ENCODE measurements at regions of chr4 and their contacts with region 1.

Region 1: GRCh38 chr4:6327041-6327917 is 57.6 kb downstream of the WFS1 start:
- DNase-seq: no peak
- ATAC-seq: peak; percentile 81
- H3K4me3 ChIP-seq: no peak overlapping the region
- H3K27ac ChIP-seq: no peak overlapping the region
- H3K4me1 ChIP-seq: no peaks in the 10 kb centered on the region; the same call in 1 of the 2 replicates
- H3K27me3 ChIP-seq: peaks cover 3% of the 10 kb centered on the region in 2 experiments; a peak in 3 of 4 replicates
- CTCF ChIP-seq: peak; percentile 87 to 91 (median 90); a peak in 5 of 6 replicates
- EP300 ChIP-seq: no peak
- POLR2A ChIP-seq: no peak
- RAD21 ChIP-seq: peak; percentile 97

Region 2: GRCh38 chr4:5998333-5998936 is 328.8 kb before region 1 on chr4:
- CTCF ChIA-PET with region 1: interaction called, 38 read pairs
- POLR2A ChIA-PET with region 1: no interaction called
- RAD21 ChIA-PET with region 1: interaction called, 26 read pairs
- SMC1A ChIA-PET with region 1: interaction called, 39 read pairs
- in situ Hi-C with region 1: loop called (anchors 5 kb)
- intact Hi-C with region 1: loop called (anchors 1 kb)
- DNase-seq: no peak
- ATAC-seq: peak; percentile 94
- H3K4me3 ChIP-seq: no peak overlapping the region
- H3K27ac ChIP-seq: no peak overlapping the region
- H3K4me1 ChIP-seq: peaks cover 11% of the 10 kb centered on the region
- H3K27me3 ChIP-seq: no peaks in the 10 kb centered on the region; a peak in 2 of 4 replicates
- CTCF ChIP-seq: peak; percentile 93 to 98 (median 94)
- EP300 ChIP-seq: no peak
- POLR2A ChIP-seq: no peak
- RAD21 ChIP-seq: peak; percentile 91

Region 3: GRCh38 chr4:6134612-6135220 is 192.6 kb before region 1 on chr4:
- CTCF ChIA-PET with region 1: interaction called, 60 read pairs
- POLR2A ChIA-PET with region 1: no interaction called
- RAD21 ChIA-PET with region 1: interaction called, 12 read pairs
- SMC1A ChIA-PET with region 1: interaction called, 7 read pairs
- in situ Hi-C with region 1: loop called (anchors 5 kb)
- intact Hi-C with region 1: loop called (anchors 1 kb)
- DNase-seq: peak; percentile 51
- ATAC-seq: peak; percentile 99
- H3K4me3 ChIP-seq: no peak overlapping the region
- H3K27ac ChIP-seq: no peak overlapping the region
- H3K4me1 ChIP-seq: peaks cover 7% of the 10 kb centered on the region; the same call in 1 of the 2 replicates
- H3K27me3 ChIP-seq: no peaks in the 10 kb centered on the region
- CTCF ChIP-seq: peak; percentile 72 to 96 (median 73)
- EP300 ChIP-seq: no peak
- POLR2A ChIP-seq: no peak
- RAD21 ChIP-seq: peak; percentile 78

Region 4: DNA sequence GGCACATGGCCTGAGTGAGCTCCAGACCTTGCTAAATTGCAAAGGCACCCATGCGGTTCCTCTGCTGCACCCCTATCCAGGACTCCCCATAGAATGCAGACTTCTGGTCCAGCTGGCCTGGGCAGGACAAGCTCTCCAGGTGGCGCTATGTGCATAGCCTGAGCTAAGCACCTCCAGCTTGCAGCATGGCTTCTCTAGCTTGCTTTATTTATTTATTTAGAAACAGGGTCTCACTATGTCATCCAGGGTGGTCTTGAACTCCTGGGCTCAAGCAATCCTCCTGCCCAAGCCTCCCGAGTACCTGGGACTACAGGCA is 63.1 kb before region 1 on chr4:
- CTCF ChIA-PET with region 1: interaction called, 419 read pairs
- POLR2A ChIA-PET with region 1: interaction called, 4 read pairs
- RAD21 ChIA-PET with region 1: interaction called, 156 read pairs
- SMC1A ChIA-PET with region 1: interaction called, 57 read pairs
- in situ Hi-C with region 1: no loop called
- intact Hi-C with region 1: loop called (anchors 1 kb)
- DNase-seq: no peak
- ATAC-seq: peak; percentile 83
- H3K4me3 ChIP-seq: no peak overlapping the region
- H3K27ac ChIP-seq: no peak overlapping the region
- H3K4me1 ChIP-seq: peaks cover 15% of the 10 kb centered on the region
- H3K27me3 ChIP-seq: no peaks in the 10 kb centered on the region
- CTCF ChIP-seq: peak; percentile 57 to 64 (median 59)
- EP300 ChIP-seq: no peak
- POLR2A ChIP-seq: no peak
- RAD21 ChIP-seq: peak; percentile 80

Region 5: DNA sequence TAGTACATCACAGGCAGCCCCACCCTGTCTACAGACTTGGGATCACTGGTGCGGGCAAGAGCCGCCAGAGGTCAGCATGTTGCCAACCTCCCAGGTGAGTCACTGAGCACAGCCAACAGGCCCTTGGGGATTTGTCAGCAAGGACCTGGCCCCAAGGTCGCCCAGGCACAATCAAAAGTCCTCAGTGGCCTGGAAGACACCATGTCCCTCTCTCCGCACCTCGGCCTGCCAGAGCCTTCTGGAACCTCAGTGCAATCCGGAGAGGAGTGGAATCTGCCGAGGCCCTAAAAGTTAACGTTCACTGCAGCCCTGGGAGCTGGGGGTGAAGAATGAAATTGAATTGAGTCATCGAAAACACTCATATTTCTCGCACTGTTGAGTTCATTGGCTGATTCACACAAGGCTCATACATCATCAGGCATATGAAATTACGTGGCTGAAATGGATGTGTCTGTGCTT is 16.7 kb after region 1 on chr4:
- CTCF ChIA-PET with region 1: interaction called, 40 read pairs
- POLR2A ChIA-PET with region 1: no interaction called
- RAD21 ChIA-PET with region 1: no interaction called
- SMC1A ChIA-PET with region 1: no interaction called
- in situ Hi-C with region 1: no loop called
- intact Hi-C with region 1: no loop called
- DNase-seq: no peak
- ATAC-seq: peak; percentile 90
- H3K4me3 ChIP-seq: no peak overlapping the region
- H3K27ac ChIP-seq: no peak overlapping the region
- H3K4me1 ChIP-seq: no peaks in the 10 kb centered on the region
- H3K27me3 ChIP-seq: peaks cover 0 to under 1% of the 10 kb centered on the region in 2 experiments; a peak in 2 of 4 replicates
- CTCF ChIP-seq: peak; percentile 12 to 44 (median 33); a peak in 4 of 6 replicates
- EP300 ChIP-seq: no peak
- POLR2A ChIP-seq: no peak
- RAD21 ChIP-seq: peak; percentile 30; the same call in 1 of the 2 replicates

Region 6: DNA sequence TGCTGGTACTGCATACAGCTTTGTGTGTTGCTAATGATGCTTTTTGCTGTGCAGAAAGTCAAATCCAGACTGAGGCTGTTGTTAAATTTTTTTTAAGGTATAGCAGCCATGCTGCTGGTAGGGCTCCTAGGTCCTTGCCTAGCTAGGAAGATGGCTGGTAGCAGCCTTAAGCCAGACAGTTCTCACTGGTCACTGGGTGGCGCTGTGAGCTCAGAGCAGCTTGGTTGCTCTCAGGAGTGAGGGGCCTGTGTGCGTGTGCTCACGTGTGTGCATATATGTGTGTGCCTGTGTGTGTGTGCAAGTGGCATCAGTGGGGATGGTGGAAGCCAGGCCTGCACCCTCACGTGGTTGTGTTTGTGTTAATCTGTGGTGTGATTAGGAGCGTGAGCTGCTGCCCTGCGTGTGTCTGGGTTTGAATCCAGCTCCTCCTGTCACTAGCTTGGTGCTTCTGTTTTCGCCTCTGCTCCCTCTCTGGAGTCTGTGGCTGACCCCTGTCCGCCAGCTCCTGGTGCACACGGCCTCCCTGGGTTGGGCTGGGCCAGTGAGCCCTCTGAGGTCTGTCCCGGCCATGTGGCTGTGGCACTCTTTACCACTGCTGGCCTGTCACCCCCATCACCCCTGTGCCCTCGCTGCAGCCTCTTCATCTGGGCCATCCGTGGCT is 911.2 kb after region 1 on chr4:
- CTCF ChIA-PET with region 1: no interaction called
- POLR2A ChIA-PET with region 1: no interaction called
- RAD21 ChIA-PET with region 1: no interaction called
- SMC1A ChIA-PET with region 1: no interaction called
- in situ Hi-C with region 1: no loop called
- intact Hi-C with region 1: no loop called
- DNase-seq: no peak
- ATAC-seq: no peak
- H3K4me3 ChIP-seq: no peak overlapping the region
- H3K27ac ChIP-seq: no peak overlapping the region
- H3K4me1 ChIP-seq: no peaks in the 10 kb centered on the region
- H3K27me3 ChIP-seq: no peaks in the 10 kb centered on the region
- CTCF ChIP-seq: 0 out of 6 replicates have a peak, but pooled peaks of 1 of the 3 experiments have one; percentile 8
- EP300 ChIP-seq: no peak
- POLR2A ChIP-seq: no peak
- RAD21 ChIP-seq: no peak